T-cell (primary cell): ENCODE measurements at regions of chr14 and their contacts with region 1.

Region 1: GRCh38 chr14:50736932-50737419 is 68.9 kb upstream of the SAV1 start:
- DNase-seq: peak in 3 of 35 experiments; percentile 2 to 24 (median 2)
- ATAC-seq: peak in 2 of 4 experiments; percentile 37 to 40
- H3K4me3 ChIP-seq: no peak overlapping the region
- H3K4me3 Mint-ChIP-seq: no peak overlapping the region
- H3K27ac ChIP-seq: peak overlapping the region; percentile 34
- H3K27ac Mint-ChIP-seq: peak overlapping the region; percentile 66 to 74
- H3K4me1 ChIP-seq: peaks cover 0 to 8% of the 10 kb centered on the region in 2 experiments
- H3K4me1 Mint-ChIP-seq: peaks cover 0 to 20% (median 13%) of the 10 kb centered on the region in 3 donors
- H3K27me3 ChIP-seq: no peaks in the 10 kb centered on the region
- H3K27me3 Mint-ChIP-seq: no peaks in the 10 kb centered on the region

Region 2: GRCh38 chr14:50085570-50086320 is 651.2 kb before region 1 on chr14:
- CTCF ChIA-PET with region 1: no interaction called
- POLR2A ChIA-PET with region 1: no interaction called
- DNase-seq: peak in 4 of 35 experiments; percentile 13 to 63 (median 26)
- ATAC-seq: no peak
- H3K4me3 ChIP-seq: no peak overlapping the region
- H3K4me3 Mint-ChIP-seq: peak overlapping the region; percentile 39 to 70 (median 59)
- H3K27ac ChIP-seq: peak overlapping the region; percentile 99
- H3K27ac Mint-ChIP-seq: peak overlapping the region; percentile 95 to 96
- H3K4me1 ChIP-seq: peaks cover 83 to 90% of the 10 kb centered on the region in 2 experiments
- H3K4me1 Mint-ChIP-seq: peaks cover 91 to 93% (median 92%) of the 10 kb centered on the region in 3 donors
- H3K27me3 ChIP-seq: no peaks in the 10 kb centered on the region
- H3K27me3 Mint-ChIP-seq: no peaks in the 10 kb centered on the region

Region 3: DNA sequence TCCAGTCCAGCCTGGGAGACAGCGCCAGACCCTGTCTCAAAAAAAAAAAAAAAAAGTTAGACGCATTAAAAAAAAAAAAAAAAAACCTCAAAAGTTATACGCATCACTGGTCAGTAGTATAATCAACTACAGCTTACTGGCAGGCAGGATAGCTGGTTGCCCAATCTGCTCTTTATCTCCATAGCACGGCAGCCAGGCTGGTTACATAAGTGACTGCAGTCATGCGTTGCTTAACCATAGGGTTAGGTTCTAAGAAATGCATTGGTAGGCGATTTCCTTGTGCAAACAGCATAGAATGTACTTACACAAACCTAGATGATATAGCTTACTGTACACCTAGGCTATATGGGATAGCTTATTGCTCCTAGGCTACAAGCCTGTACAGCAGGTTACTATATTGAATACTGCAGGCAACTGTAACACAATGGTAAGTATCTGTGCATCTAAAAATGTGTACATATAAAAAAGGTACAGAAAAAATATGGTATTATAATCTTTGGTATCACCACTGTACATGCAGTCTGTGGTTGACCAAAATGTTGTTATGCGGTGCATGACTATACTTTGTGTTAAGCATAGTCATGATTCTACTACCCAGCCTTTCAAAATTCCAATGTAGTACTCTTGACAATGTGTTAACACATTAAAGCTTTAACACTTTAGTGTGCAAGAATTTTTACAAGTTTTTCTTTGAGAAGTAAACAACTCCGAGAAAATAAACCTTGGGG is 433.1 kb before region 1 on chr14:
- CTCF ChIA-PET with region 1: no interaction called
- POLR2A ChIA-PET with region 1: no interaction called
- DNase-seq: peak in 4 of 35 experiments; percentile 2 to 28 (median 14)
- ATAC-seq: no peak
- H3K4me3 ChIP-seq: no peak overlapping the region
- H3K4me3 Mint-ChIP-seq: no peak overlapping the region
- H3K27ac ChIP-seq: no peak overlapping the region
- H3K27ac Mint-ChIP-seq: no peak overlapping the region
- H3K4me1 ChIP-seq: no peaks in the 10 kb centered on the region
- H3K4me1 Mint-ChIP-seq: peaks cover 0 to 11% (median 0%) of the 10 kb centered on the region in 3 donors
- H3K27me3 ChIP-seq: no peaks in the 10 kb centered on the region
- H3K27me3 Mint-ChIP-seq: no peaks in the 10 kb centered on the region

Region 4: DNA sequence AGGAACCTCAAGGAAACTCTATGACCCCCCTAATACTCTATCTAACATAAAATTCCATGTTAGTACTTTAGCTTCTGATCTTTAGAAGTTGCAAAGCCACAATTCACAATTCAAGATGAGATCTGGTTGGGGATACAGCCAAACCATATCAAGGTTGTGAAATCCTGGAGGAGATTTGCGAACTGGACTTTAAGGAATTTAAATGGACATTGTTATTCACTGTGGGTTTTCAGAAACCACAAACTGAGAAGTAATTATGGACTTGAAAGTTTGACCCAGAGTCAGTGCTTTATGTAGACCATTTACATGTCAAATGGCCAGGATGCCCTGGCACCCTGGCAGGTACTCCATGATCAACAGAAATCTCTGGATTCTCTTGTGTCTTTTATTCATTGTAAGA is 326.1 kb before region 1 on chr14:
- CTCF ChIA-PET with region 1: no interaction called
- POLR2A ChIA-PET with region 1: no interaction called
- DNase-seq: no peak
- ATAC-seq: no peak
- H3K4me3 ChIP-seq: no peak overlapping the region
- H3K4me3 Mint-ChIP-seq: no peak overlapping the region
- H3K27ac ChIP-seq: no peak overlapping the region
- H3K27ac Mint-ChIP-seq: no peak overlapping the region
- H3K4me1 ChIP-seq: no peaks in the 10 kb centered on the region
- H3K4me1 Mint-ChIP-seq: peaks cover 2 to 6% (median 5%) of the 10 kb centered on the region in 3 donors
- H3K27me3 ChIP-seq: no peaks in the 10 kb centered on the region
- H3K27me3 Mint-ChIP-seq: no peaks in the 10 kb centered on the region

Region 5: DNA sequence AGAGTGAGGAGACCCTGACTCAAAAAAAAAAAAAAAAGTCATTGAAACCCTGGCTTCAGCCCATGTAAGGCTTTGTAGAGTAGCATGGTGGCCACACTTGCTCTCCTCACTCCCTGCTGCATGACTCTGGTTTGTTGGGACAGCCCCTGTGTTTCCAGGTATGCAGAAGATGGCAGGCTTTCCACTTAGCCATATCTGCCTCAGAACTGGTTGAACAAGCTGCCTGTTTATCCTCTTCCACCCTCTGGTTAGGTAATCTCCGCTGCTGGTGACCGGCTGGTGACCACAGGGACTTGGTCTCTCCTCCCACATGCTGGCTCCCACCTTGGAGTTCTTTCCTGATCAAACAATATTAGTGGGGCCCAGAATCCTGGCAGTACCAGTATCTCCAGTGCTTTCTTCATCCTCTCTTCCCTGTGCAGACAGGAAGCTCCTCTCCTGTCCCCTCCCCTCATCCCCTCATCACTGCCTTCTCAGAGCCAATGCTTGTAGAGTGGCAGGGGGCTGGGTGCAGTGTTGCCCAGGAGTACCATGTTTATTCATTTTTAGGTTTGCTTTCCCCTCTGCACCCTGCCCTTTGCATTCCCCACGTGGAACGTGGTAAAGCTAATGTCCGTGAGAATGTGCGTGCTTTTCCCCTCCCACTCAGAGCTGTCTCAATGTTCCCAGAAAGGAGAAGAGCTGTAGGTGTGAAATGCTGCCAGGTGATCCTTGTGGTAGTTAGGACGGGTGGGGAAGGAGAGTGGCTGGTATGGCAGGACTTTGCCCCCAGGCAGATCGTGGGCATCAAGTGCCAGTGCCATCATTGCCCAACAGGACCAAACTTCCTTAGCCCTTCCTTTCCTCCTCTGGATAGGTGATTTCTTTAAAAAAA is 146.2 kb after region 1 on chr14:
- CTCF ChIA-PET with region 1: no interaction called
- POLR2A ChIA-PET with region 1: interaction called in 1 of 2 experiments, 11 read pairs
- DNase-seq: no peak
- ATAC-seq: no peak
- H3K4me3 ChIP-seq: no peak overlapping the region
- H3K4me3 Mint-ChIP-seq: no peak overlapping the region
- H3K27ac ChIP-seq: no peak overlapping the region
- H3K27ac Mint-ChIP-seq: no peak overlapping the region
- H3K4me1 ChIP-seq: no peaks in the 10 kb centered on the region
- H3K4me1 Mint-ChIP-seq: no peaks in the 10 kb centered on the region
- H3K27me3 ChIP-seq: peaks cover 0 to 21% of the 10 kb centered on the region in 2 experiments
- H3K27me3 Mint-ChIP-seq: peaks cover 30 to 38% of the 10 kb centered on the region in 2 donors